GM18951 (cell line): ENCODE measurements at regions of chr12 and their contacts with region 1.

Region 1: GRCh38 chr12:91382081-91382543 is 199.5 kb upstream of the DCN start:
- POLR2A ChIP-seq: no peak

Region 2: DNA sequence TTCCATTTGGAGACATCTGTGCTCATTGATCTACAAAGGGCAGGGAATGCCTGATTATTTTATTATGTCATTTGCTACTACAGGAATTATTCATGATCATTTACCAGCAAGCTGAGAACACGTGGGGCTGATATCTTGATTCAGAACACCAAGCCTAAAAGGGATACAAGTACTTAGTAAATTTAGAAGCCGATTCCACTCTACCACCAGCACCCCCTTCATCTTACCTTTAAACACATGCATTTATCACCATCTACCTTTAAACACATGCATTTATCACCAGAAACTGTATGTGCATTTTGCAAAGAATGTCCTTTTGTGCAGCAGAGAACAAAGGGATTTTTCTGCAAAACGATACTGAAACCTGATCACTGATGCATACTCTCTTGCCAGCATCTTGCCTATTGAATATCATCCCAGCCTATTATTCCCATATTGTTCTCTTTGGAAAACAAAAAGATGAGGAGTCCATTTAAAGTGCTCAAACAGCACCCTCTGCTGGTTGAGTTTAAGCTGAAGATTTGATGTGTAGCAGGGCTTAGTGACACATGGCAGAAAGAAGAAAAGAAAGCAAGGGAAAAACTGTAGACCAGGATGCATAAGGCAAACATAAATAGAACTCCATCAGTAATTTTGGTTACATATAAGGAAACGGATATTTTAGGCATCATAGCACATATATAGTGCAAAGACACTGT is 1188.1 kb after region 1 on chr12:
- in situ Hi-C with region 1: loop called (anchors 10 kb)
- POLR2A ChIP-seq: no peak